ENCODE measurements at regions of chr17 and their contacts with region 1.

Region 1: GRCh38 chr17:2416010-2416734 is 15.3 kb upstream of the MNT start:
- DNase-seq: peak; percentile 96
- H3K4me3 Mint-ChIP-seq: no peak overlapping the region
- H3K27ac Mint-ChIP-seq: no peak overlapping the region
- H3K4me1 Mint-ChIP-seq: peaks cover 3% of the 10 kb centered on the region
- H3K27me3 Mint-ChIP-seq: no peaks in the 10 kb centered on the region

Region 2: DNA sequence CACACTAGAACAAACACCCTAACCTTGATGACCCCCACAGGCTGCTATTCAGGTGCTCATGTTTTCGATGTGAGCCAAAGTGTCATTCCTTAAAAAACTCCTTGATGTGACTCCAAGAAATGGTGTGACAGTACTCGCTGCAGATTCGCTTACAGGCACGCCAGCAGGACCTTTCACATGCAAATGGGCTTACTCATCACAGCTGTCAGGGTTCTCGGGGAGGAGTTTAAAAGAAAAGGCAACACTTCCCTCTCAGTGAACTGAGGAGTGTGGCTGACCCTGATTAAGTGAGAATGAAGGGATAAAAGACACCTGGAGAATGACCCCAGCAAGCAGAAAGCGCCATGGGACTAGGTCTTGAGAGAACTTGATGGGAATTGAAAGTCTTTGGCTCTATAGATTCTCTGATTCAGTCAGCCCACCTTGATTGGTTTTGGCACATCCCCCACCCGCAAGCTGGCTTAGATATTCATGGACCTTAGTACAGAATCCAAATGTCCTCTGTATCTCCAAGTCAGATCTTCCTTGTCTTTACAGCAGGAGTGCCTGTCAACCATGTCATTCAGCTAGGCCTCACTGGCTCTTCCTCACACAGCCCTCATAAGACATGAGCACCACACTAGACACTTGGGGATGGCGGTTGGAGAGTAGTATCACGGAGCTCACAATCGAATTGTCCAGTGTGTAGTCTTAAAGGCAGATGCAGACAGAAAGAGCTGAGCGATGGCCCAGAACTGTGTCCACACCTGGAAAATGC is 278.7 kb before region 1 on chr17:
- intact Hi-C with region 1: no loop called
- DNase-seq: no peak
- H3K4me3 Mint-ChIP-seq: no peak overlapping the region
- H3K27ac Mint-ChIP-seq: no peak overlapping the region
- H3K4me1 Mint-ChIP-seq: peaks cover 19% of the 10 kb centered on the region
- H3K27me3 Mint-ChIP-seq: no peaks in the 10 kb centered on the region

Region 3: DNA sequence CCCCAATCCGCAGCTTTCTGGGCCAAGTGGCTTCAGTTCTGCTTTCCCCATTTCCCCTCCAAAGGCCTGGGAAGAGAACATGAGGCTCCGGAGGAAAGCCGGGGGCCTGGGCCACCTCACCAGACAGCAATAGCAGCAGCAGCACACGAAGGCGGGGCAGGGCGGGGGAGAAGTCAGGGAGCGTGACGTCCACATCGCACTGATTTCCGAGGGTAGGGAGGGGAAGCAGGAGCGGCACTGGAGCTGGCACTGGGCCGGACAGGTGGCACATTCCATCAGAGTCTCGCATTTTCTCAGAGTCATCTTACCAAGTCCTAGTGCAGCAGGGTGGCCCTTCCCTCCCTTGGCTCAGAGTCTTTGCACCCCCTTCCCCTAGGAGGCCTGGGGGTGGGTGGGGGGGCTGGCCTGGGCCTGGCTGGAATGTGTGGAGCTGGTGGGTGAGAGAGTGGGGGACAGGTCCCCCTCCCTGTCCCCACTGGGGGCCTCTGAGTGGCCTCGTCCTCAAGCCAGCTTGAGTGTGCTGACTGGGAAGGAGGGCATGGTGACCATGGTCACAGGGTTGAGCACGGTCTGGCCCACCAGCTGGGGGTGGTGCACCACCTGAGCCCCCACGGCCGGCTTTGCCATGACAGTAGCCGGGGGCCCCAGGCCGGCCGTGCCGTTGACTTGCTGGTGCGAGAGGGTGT is 29.6 kb before region 1 on chr17:
- intact Hi-C with region 1: loop called (anchors 1 kb)
- DNase-seq: no peak
- H3K4me3 Mint-ChIP-seq: no peak overlapping the region
- H3K27ac Mint-ChIP-seq: no peak overlapping the region
- H3K4me1 Mint-ChIP-seq: peaks cover 22% of the 10 kb centered on the region
- H3K27me3 Mint-ChIP-seq: no peaks in the 10 kb centered on the region

Region 4: GRCh38 chr17:2468270-2468669 is 52.1 kb after region 1 on chr17:
- intact Hi-C with region 1: no loop called
- DNase-seq: no peak
- H3K4me3 Mint-ChIP-seq: no peak overlapping the region
- H3K27ac Mint-ChIP-seq: no peak overlapping the region
- H3K4me1 Mint-ChIP-seq: no peaks in the 10 kb centered on the region
- H3K27me3 Mint-ChIP-seq: no peaks in the 10 kb centered on the region